Thyroid gland (tissue), 4 donors: ENCODE measurements at regions of chr11 and their contacts with region 1.

Region 1: DNA sequence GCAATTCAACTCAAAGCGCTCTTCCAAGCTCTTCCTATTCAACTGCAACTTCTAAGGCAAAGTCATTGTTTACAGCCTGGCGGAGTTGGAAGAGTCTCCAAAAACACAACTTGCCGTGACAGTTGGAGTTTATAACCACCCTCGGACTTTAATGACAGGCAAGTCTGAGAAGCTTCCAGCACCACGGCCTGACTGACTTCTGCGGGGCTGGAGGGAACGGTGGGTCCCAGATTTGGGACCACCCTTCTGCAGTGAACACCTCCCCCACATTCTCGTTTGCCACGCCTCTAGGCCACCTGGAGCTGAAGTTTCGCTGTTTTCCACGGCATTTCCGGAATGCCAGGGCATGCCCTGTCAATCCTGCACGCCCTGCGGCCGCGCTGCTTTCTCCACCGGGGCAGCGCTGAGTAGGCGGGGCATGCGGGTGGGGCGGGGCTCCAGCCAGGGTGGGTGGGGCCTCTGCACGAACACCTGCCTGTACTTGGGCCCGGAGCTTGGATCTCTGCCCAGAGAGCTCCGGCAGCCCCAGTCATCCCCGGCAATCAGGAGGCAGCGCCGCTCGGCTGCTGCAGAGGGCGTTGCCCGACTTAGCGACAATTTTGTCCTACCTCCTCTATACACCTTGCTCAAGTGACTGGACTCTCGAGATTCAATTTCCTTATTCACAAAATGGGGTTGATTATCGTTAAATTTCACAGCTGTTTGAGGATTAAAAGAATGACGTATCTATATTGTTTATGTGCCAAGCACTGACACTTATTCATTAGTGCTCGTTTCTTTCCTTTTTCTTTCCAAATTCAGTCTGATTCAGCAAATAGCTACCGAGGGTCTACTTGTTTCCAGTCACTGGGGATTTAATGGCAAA is 48.7 kb upstream of the BIRC3 start:
- DNase-seq: peak; percentile 94 to 96
- H3K4me3 ChIP-seq: peak overlapping the region in 2 of 3 donors; percentile 8 to 27
- H3K27ac ChIP-seq: peak overlapping the region; percentile 11 to 68 (median 29)
- H3K4me1 ChIP-seq: peaks cover 3 to 4% of the 10 kb centered on the region in 2 donors
- H3K27me3 ChIP-seq: no peaks in the 10 kb centered on the region
- CTCF ChIP-seq: peak; percentile 19 to 72 (median 59)
- POLR2A ChIP-seq: peak in 1 of 2 donors; percentile 53

Region 2: DNA sequence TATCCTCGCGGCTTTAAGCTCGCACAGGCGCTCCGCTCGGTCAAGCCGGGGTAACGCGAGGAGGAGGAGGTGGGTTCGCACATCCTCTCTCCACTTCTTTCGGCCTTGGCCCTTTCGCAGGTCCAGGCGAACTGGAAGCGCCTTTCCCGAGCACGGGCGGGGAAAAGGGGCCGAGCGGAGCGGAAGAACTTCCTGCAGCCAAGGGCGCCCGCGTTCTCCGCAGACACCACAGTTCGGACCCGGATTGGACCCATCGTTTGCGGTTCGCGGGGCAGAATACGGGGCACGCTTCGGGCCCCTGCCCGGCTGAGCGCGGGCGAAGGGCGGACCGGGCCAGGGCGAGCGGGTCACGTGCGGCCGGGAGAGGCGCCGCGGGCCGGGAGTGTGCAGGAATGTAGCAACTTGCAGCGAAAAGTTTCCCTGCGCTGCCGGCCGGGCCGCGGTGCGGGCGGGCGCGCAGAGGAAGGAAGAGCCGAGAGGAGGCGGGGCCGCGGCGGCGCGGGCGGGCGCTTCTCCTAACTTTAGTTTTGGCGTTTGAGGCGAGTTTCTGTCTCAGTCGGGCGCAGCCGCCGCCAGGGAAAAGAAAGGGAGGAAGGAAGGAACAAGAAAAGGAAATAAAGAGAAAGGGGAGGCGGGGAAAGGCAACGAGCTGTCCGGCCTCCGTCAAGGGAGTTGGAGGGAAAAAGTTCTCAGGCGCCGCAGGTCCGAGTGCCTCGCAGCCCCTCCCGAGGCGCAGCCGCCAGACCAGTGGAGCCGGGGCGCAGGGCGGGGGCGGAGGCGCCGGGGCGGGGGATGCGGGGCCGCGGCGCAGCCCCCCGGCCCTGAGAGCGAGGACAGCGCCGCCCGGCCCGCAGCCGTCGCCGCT is 158.4 kb before region 1 on chr11 and contains the start of gene YAP1:
- intact Hi-C with region 1: loop called (anchors 10 kb)
- DNase-seq: peak; percentile 89 to 92
- H3K4me3 ChIP-seq: peak within 1 kb of the TSS; percentile 73 to 96 (median 95)
- H3K27ac ChIP-seq: peak within 1 kb of the TSS; percentile 97 to 100 (median 99)
- H3K4me1 ChIP-seq: peaks cover 21 to 25% of the 10 kb centered on the region in 2 donors
- H3K27me3 ChIP-seq: no peaks in the 10 kb centered on the region
- CTCF ChIP-seq: no peak
- POLR2A ChIP-seq: peak in 1 of 2 donors; percentile 87
- total RNA-seq, gene YAP1: 162 to 202 (median 176) TPM

Region 3: DNA sequence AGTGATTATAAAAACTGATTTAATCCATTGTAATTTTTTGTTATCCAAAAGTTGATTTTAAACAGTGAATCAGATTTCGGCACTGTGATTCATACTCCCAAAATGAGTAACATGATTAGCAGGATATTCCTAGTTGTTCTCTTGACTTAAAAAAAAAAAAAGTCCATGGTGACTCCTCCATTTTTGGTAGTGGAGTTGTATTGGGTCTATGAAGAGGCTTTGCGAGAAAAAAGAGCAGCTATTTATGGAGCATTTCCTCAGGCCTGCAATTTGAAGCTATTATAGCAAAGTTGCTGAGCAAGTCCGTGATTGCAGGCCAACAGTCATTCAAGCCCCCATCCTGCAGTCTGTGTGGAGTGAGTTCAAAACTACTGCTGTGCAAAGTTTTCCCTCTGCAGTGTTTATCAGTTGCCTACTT is 129.5 kb before region 1 on chr11:
- intact Hi-C with region 1: no loop called
- DNase-seq: peak in 1 of 2 donors; percentile 25
- H3K4me3 ChIP-seq: no peak overlapping the region
- H3K27ac ChIP-seq: peak overlapping the region in 2 of 3 donors; percentile 47 to 55
- H3K4me1 ChIP-seq: peaks cover 30 to 48% of the 10 kb centered on the region in 2 donors
- H3K27me3 ChIP-seq: no peaks in the 10 kb centered on the region
- CTCF ChIP-seq: no peak
- POLR2A ChIP-seq: no peak